Activated T-helper 2 cell treated with anti-CD3 and anti-CD28 coated beads, Interferon-gamma antibody, Interleukin-2, Interleukin-4, amounts not matched to agents 10 μg/mL and 5 μg/mL and 100 μg/mL, durations not matched to agents 14 hours and 24 hours and 36 hours (primary cell): ENCODE measurements at regions of chr16 and their contacts with region 1.

Region 1: DNA sequence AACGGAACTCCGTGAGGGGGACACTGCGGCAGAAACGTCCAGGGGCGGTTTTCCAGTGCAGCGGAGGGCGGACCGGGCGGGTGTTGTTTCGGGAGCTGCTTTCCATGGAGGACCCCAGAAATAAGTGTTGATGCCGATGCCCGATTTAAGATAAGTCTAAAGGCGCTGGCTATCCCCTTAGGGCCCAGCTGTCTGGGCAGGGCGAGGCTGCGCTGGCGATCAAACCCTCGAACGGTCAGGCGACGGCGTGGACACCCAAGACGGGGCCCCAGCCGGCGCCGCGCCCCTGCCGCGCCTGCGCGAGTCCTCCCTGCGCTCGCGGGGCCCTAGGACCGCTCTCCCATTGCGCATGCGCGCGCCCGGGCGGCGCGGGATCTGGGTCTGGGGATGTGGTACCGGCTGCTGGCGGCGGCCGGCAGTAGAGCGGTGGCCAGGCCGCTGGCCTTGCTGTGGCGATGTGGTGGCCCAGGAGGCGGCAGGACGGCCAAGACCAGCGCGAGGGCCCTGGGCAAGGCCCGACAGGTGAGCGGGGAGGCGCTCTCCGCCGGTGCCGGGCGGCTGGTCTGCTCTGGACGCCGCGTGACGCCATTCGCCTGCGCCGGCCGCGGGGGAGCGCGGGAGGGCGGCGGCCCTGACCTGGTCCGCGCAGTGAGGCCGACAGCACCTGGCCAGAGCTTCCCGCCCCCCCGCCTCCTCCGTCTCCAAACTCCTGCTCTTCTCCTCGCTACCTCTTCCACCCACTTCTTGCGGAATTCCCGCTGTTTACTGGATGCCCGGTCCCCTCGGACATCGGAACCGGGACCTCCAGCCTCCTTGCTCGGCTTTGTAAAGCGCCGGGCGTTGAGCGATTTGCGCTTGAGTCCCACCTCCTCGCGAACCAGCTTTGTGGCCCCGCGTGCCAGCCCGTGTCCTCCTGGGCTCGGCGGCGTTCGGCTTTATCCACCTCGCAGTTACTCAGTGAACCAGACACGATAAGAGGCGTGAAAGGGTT is 24.0 kb downstream of the DEF8 start:
- DNase-seq: peak; percentile 90
- H3K4me3 Mint-ChIP-seq: peak overlapping the region; percentile 95
- H3K27ac Mint-ChIP-seq: peak overlapping the region; percentile 96
- H3K4me1 Mint-ChIP-seq: peaks cover 17% of the 10 kb centered on the region
- H3K27me3 Mint-ChIP-seq: no peaks in the 10 kb centered on the region

Region 2: GRCh38 chr16:89945670-89946069 is 26.9 kb before region 1 on chr16:
- intact Hi-C with region 1: loop called (anchors 1 kb)
- DNase-seq: no peak
- H3K4me3 Mint-ChIP-seq: no peak overlapping the region
- H3K27ac Mint-ChIP-seq: no peak overlapping the region
- H3K4me1 Mint-ChIP-seq: peaks cover 4% of the 10 kb centered on the region
- H3K27me3 Mint-ChIP-seq: peaks cover 35% of the 10 kb centered on the region